ENCODE measurements at regions of chr3 and their contacts with region 1.

Region 1: DNA sequence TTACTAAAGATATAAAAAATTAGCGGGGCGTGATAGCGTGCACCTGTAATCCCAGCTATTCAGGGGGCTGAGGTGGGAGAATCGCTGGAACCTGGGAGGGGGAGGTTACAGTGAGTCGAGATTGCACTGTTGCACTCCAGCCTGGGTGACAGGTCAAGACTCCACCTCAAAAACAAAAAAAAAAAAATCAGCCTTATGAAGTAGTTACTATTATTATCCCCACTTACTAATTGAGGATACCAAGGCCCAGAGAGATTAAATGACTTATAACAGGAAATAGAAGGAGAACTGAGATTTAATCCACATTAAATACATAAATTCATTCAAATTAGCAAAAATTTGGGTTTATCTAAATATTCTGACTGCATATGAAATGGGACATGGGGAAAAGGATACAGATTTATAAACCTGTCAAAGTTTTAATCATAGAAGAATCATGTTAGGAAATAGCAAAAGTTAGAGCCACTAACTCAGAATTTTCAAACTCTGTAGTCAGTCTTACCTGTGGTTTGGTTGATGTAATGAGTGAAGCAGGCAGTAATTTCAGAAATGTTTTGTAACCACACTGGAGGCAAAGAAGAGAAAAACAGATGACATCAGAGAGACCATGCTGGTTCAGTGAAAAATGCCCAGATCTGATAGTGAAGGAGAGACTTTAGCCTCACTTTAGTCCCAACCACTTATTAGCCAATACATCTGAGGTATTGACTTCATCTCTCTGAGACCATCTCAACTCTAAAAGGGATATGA is 25.0 kb upstream of the ACAP2 start:
- DNase-seq: peak; percentile 12
- H3K4me3 Mint-ChIP-seq: peak overlapping the region; percentile 50
- H3K27ac Mint-ChIP-seq: peak overlapping the region; percentile 61
- H3K4me1 Mint-ChIP-seq: peaks cover 12% of the 10 kb centered on the region
- H3K27me3 Mint-ChIP-seq: no peaks in the 10 kb centered on the region

Region 2: DNA sequence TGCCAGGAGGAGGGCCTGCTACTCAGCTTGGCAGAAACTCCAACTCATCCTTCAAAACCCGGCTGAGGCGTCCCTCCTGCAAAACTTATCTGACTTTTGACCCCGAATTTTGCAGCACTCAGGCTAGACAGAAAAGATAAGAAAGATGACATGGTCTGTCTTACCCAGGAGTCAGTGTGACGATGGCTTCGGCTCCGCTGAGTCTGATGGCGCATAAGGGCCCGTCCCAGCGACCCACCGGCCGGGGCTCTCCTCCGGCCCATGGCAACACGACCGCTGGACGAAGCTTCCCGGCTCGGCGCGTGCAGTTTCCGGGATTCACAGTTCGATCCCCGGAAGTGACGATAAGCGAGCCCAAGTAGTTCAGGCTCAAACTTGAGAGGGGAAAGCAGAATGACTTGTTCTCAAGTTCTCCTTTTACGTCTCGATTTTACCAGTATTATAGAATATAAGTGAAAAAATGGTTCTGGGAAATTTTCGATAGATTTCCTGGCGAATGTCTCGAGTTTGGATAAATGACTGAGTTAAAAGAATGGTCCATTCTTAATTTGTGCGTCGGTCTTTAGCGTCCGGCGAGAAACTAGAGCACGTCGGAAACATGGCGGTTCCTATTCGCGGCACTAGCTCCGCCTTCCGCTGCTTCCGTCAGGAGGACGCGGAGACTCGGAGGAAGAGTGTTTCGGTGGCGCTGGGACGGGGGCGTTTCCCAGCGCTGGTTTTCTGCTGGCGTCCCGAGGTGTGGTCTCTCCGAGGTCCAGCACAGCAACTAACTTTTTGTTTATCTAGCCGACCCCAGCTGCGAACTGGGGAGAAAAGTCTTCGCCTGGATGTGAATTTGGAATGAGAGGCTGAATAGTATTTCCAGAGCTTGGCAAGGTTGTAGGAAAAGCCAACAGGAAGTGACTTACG is 795.7 kb before region 1 on chr3 and contains the start of gene LSG1:
- intact Hi-C with region 1: no loop called
- DNase-seq: peak; percentile 84
- H3K4me3 Mint-ChIP-seq: peak within 1 kb of the TSS; percentile 99
- H3K27ac Mint-ChIP-seq: peak within 1 kb of the TSS; percentile 97
- H3K4me1 Mint-ChIP-seq: peaks cover 68% of the 10 kb centered on the region
- H3K27me3 Mint-ChIP-seq: peaks cover 3% of the 10 kb centered on the region
- total RNA-seq, gene LSG1: 65.1 and 66.3 TPM in 2 replicates

Region 3: DNA sequence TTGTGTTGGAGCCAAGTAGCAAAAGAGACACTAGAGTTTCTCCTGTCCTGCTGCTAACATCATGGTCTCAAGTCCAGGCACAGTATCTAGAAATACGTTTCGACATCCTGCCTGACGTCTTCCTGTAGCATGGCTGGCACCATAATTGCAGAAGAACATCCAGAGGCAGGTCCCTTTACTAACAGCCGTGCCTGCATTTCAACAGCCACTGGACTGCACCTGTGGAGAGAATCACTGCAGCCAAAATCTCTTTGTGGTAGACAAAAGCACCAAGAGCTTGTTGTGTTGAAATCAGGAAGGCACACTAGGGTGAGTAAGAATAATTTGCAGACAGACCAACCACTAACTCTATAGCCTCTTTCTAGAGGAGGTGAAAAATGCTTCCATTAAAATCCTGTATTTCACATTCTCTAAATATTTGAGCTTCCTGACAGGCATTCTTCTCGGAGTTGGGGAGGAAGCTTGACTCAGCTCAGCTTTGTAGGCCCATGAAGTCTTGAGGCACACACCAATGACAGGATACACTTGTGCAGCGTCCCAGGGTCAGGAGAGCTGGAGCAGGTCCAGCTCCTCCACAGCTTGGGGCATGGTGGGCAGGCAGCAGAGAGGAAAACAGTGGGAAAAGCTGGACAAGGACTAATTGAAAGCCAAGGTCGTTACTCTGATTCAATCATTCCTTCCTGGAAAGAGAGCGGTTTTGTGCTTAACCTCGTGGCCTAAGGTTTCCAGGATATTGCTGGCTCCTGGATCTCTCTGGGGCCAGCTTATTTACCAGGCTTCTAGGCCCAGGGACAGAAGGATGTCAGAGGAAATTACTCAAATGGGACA is 537.2 kb before region 1 on chr3:
- intact Hi-C with region 1: no loop called
- DNase-seq: no peak
- H3K4me3 Mint-ChIP-seq: no peak overlapping the region
- H3K27ac Mint-ChIP-seq: no peak overlapping the region
- H3K4me1 Mint-ChIP-seq: no peaks in the 10 kb centered on the region
- H3K27me3 Mint-ChIP-seq: peaks cover 7% of the 10 kb centered on the region

Region 4: GRCh38 chr3:195356151-195357086 is 111.4 kb before region 1 on chr3:
- intact Hi-C with region 1: no loop called
- DNase-seq: no peak
- H3K4me3 Mint-ChIP-seq: no peak overlapping the region
- H3K27ac Mint-ChIP-seq: no peak overlapping the region
- H3K4me1 Mint-ChIP-seq: peaks cover 7% of the 10 kb centered on the region
- H3K27me3 Mint-ChIP-seq: no peaks in the 10 kb centered on the region

Region 5: DNA sequence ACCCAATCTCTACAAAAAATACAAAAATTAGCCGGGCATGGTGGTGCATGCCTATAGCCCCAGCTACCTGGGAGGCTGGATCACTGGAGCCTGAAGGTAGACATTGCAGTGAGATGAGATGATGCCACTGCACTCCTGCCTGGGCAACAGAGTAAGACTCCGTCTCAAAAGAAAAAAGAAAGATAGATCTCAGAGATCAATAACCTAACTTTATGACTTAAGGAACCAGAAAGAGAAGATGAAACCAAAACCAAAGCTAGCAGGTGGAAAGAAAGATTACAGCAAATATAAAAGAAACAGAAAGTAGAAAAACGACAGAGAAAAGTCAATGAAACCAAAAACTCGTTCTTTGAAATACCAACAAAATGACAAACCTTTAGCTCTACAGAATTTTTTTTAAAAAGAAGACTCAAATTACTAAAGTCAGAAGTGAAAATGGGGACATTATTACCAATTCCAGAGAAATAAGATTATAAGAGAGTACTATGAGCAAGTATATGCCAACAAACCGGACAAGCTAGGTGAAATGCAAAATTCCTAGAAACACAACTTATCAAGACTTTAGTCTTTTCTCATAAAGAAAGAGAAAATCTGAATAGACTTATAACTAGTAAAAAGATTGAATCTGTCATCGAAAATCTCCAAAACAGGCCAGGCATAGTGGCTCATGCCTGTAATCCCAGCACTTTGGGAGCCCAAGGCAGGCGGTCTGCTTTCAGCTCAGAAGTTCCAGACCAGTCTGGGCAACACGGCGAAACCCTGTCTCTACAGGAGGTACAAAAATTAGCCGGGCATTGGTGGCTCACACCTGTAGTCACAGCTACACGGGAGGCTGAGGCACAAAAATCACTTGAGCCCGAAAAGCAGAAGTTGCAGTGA is 60.0 kb before region 1 on chr3:
- intact Hi-C with region 1: loop called (anchors 2 kb)
- DNase-seq: no peak
- H3K4me3 Mint-ChIP-seq: peak overlapping the region; percentile 68
- H3K27ac Mint-ChIP-seq: peak overlapping the region; percentile 69
- H3K4me1 Mint-ChIP-seq: peaks cover 40% of the 10 kb centered on the region
- H3K27me3 Mint-ChIP-seq: peaks cover 5% of the 10 kb centered on the region